ENCODE measurements at regions of chr1 and their contacts with region 1.

Region 1: DNA sequence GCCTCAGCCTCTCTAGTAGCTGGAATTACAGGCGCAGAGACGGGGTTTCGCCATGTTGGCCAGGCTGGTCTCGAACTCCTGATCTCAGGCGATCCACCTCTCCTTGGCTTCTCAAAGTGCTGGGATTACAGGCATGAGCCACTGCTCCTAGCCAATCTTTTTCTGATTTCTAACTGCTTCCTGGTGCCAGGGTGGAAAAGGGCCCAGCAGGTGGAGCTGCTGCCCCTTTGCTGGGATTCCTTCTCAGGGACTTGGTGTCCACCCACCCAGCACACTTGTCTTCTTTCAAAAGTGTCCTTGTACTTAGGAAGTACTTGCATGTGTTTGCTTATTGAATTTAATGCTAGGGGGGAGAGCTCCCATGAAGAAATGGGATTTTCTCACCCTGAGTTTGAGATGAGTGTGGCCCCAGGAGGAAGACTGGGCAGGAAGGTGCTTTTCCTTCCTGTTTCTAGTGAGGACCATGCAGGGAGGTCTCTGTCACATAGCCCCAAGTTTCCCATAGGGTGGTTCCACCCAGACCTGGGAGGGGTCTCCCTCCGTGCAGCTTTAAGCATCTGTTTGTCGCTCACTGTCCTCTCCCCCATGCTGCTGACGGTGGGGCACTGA is 14.2 kb downstream of the UTP11 start:
- DNase-seq: peak; percentile 80
- ATAC-seq: no peak
- H3K4me3 Mint-ChIP-seq: no peak overlapping the region
- H3K27ac Mint-ChIP-seq: peak overlapping the region; percentile 91
- H3K4me1 Mint-ChIP-seq: peaks cover 58% of the 10 kb centered on the region
- H3K27me3 Mint-ChIP-seq: no peaks in the 10 kb centered on the region

Region 2: GRCh38 chr1:37479255-37480124 is 547.2 kb before region 1 on chr1:
- CTCF ChIA-PET with region 1: no interaction called
- POLR2A ChIA-PET with region 1: no interaction called
- intact Hi-C with region 1: loop called in 1 of 2 experiments (anchors 1 kb)
- DNase-seq: peak; percentile 96
- ATAC-seq: peak; percentile 52
- H3K4me3 Mint-ChIP-seq: peak overlapping the region; percentile 95
- H3K27ac Mint-ChIP-seq: peak overlapping the region; percentile 98
- H3K4me1 Mint-ChIP-seq: peaks cover 32% of the 10 kb centered on the region
- H3K27me3 Mint-ChIP-seq: no peaks in the 10 kb centered on the region

Region 3: DNA sequence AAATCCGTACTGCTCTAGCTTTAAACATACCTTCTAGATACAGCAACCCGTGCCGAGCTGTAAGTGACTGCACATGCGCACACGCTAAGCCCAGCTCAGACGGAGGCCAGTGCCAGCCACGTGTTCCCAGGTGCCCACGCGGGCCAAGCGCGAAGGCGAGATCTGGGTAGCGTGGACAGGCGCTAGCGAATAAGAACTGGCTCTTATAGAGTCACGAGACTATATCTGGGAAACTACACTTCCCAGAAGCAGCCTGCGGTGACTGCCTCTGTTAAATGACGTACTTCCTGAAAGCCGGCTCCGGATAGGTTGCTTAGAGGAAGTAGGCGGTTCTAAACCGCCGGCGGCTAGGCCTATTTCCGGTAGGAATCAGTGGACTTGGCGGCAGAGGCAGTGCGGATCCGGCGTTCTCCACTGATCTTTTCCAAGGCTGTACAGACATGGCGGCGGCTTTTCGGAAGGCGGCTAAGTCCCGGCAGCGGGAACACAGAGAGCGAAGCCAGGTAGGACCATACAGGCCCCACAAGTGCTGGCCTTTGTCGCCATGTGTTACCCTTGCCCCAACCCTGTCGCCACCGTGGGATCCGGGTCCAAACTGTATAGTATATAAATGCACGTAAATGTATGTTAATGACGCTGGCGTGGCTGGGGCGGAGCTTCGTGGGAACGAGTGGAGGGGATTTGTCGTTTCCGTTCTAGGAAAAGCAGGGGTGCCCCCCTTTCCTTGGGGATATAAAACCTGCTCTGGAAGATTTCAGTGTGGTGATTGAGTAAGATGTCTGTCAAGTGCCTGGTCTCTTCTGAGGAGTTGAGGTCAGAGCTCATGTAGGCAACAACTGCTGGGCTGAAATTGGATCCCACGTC is 14.1 kb before region 1 on chr1 and contains the start of gene UTP11:
- CTCF ChIA-PET with region 1: interaction called, 12 read pairs
- POLR2A ChIA-PET with region 1: interaction called, 27 read pairs
- intact Hi-C with region 1: loop called (anchors 1 kb)
- DNase-seq: peak; percentile 94
- ATAC-seq: peak; percentile 81
- H3K4me3 Mint-ChIP-seq: peak within 1 kb of the TSS; percentile 97
- H3K27ac Mint-ChIP-seq: peak within 1 kb of the TSS; percentile 95
- H3K4me1 Mint-ChIP-seq: peaks cover 51% of the 10 kb centered on the region
- H3K27me3 Mint-ChIP-seq: no peaks in the 10 kb centered on the region
- total RNA-seq, gene UTP11: 68.9 to 82.4 TPM

Region 4: GRCh38 chr1:38071312-38072256 is 44.9 kb after region 1 on chr1:
- CTCF ChIA-PET with region 1: interaction called, 27 read pairs
- POLR2A ChIA-PET with region 1: interaction called, 3 read pairs
- intact Hi-C with region 1: loop called (anchors 1 to 5 kb)
- DNase-seq: no peak
- ATAC-seq: peak; percentile 96
- H3K4me3 Mint-ChIP-seq: no peak overlapping the region
- H3K27ac Mint-ChIP-seq: no peak overlapping the region
- H3K4me1 Mint-ChIP-seq: no peaks in the 10 kb centered on the region
- H3K27me3 Mint-ChIP-seq: peaks cover 34% of the 10 kb centered on the region

Region 5: GRCh38 chr1:38527373-38527966 is 500.8 kb after region 1 on chr1:
- CTCF ChIA-PET with region 1: no interaction called
- POLR2A ChIA-PET with region 1: no interaction called
- intact Hi-C with region 1: loop called in 1 of 2 experiments (anchors 1 kb)
- DNase-seq: peak; percentile 85
- ATAC-seq: peak; percentile 87
- H3K4me3 Mint-ChIP-seq: no peak overlapping the region
- H3K27ac Mint-ChIP-seq: peak overlapping the region; percentile 74
- H3K4me1 Mint-ChIP-seq: peaks cover 17% of the 10 kb centered on the region
- H3K27me3 Mint-ChIP-seq: peaks cover 15% of the 10 kb centered on the region

Region 6: DNA sequence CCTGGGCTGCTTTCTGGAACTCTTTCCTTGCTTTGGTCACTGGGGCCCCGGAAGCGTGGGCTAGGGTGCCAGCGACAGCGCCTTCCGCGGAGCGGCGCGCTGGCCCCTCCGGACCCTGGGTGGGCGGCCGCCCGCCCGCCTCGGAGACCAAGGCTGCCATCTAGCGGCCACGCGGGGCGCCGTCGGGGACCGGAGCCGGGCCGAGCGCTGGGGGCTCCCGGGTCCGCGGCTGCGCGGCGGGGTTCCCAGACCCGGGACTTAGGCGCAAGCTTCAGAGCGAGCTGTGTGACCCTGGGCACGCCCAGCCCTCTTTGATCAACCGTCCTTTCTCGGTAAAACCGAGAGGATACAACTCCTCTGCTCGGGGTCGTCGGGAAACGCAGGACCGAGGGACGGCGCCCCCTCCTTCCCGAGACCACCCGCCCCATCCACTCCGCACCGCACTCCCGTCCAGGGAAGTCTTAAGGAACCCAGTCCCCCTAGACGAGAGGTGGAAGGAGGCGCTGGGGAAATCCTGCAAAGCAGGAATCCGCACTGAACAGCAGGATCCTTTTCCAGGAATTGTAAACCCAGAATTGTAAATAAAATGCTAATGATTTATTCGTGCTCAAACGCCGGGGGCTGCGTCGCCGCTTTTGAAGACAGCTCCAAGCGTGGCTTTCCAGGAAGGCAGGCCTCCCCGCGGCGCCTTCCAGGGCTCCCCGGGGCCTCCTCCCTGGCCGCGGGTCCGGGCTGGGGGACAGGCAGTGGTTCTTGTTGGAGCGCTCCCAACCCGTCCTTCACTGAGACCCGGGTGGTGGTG is 791.7 kb after region 1 on chr1:
- CTCF ChIA-PET with region 1: interaction called, 3 read pairs
- POLR2A ChIA-PET with region 1: no interaction called
- intact Hi-C with region 1: loop called in 1 of 2 experiments (anchors 1 kb)
- DNase-seq: peak; percentile 70
- ATAC-seq: peak; percentile 60
- H3K4me3 Mint-ChIP-seq: no peak overlapping the region
- H3K27ac Mint-ChIP-seq: no peak overlapping the region
- H3K4me1 Mint-ChIP-seq: peaks cover 10% of the 10 kb centered on the region
- H3K27me3 Mint-ChIP-seq: peaks cover 53% of the 10 kb centered on the region

Region 7: GRCh38 chr1:38990738-38991639 is 964.3 kb after region 1 on chr1 and contains the start of gene AKIRIN1:
- CTCF ChIA-PET with region 1: no interaction called
- POLR2A ChIA-PET with region 1: no interaction called
- intact Hi-C with region 1: loop called in 1 of 2 experiments (anchors 1 kb)
- DNase-seq: peak; percentile 98
- ATAC-seq: peak; percentile 91
- H3K4me3 Mint-ChIP-seq: peak within 1 kb of the TSS; percentile 87
- H3K27ac Mint-ChIP-seq: peak within 1 kb of the TSS; percentile 88
- H3K4me1 Mint-ChIP-seq: peaks cover 55% of the 10 kb centered on the region
- H3K27me3 Mint-ChIP-seq: no peaks in the 10 kb centered on the region
- total RNA-seq, gene AKIRIN1: 65.7 to 86.0 TPM

Measured in activated CD4-positive, alpha-beta T cell treated with anti-CD3 and anti-CD28 coated beads for 36 hours (primary cell).